ENCODE measurements at regions of chr12 and their contacts with region 1.

Region 1: DNA sequence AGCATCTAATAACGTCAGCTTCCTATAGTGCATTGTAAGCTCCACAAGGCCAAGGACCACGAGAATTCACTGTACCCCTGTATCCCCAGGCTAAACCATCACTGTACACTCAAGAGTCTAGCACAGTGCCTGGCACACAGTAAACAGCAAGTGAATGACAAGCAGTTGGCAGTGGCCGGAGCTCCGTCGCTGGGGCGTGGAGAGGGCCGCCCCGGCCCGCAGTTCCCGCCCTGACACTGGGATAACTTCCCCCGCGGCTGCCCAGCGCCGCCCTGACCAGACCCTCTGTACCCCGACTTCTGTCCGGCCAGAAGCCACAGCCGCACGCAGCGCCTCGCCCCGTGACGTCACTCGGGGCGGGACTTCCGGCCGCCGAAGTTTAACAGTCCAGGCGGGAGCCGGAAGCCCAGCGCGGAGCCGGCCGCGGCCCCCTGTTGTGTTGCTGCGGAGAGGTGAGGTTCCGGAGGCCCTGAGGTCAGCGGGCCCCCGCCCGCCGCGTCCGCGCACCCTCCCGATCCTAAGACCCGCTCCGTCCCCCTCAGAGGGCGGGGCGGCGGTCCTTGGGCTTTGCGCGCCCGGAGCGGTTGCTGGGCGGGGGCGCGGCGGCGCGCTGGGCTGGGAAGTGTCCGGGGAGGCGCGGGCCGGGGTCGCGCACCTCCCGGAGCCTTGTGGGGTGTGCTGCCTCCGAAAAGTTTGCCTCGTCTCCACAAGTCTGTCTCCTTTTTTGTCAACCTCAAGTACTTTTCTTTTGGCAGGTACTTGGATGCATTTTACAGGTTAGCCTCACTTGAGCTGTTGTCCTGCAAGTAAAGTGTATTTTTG is at the start of gene NEDD1:
- DNase-seq: peak; percentile 87
- H3K4me3 Mint-ChIP-seq: peak within 1 kb of the TSS; percentile 83
- H3K27ac Mint-ChIP-seq: peak within 1 kb of the TSS; percentile 96
- H3K4me1 Mint-ChIP-seq: peaks cover 43% of the 10 kb centered on the region
- H3K27me3 Mint-ChIP-seq: peaks cover 8% of the 10 kb centered on the region
- total RNA-seq, gene NEDD1: 38.9 to 40.7 TPM

Region 2: DNA sequence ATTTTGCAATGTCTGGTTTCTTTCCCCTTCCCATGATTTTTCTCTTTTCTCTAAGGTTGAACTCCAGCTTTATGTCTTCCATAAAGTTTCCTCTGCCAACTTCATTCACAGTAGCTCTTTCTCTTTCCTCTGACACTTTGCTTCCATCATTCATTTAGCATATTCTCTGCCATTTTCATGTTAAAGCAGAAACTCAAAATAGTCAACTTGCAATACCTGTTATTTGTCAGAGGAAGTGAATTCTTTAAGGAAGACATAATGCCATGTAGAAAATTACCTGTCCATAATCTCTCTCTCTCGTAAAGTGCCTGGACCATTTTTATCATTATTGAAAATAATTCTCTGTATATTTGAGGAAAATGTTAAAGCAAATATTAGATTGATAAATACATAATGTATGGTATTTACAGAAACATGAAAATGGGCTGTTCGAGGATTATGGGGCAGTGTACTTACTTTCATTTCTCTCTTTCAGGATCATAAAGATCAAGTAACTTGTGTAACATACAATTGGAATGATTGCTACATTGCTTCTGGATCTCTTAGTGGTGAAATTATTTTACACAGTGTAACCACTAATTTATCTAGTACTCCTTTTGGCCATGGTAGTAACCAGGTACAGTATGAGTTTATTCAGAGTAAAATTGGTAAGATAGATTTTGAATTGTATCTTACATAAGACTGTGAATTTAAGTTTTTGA is 12.6 kb after region 1 on chr12:
- CTCF ChIA-PET with region 1: no interaction called
- POLR2A ChIA-PET with region 1: interaction called, 13 read pairs
- DNase-seq: no peak
- H3K4me3 Mint-ChIP-seq: no peak overlapping the region
- H3K27ac Mint-ChIP-seq: no peak overlapping the region
- H3K4me1 Mint-ChIP-seq: peaks cover 5% of the 10 kb centered on the region
- H3K27me3 Mint-ChIP-seq: no peaks in the 10 kb centered on the region

Measured in activated CD4-positive, alpha-beta memory T cell treated with anti-CD3 and anti-CD28 coated beads, Interleukin-2, amount 10 ng/mL, durations not matched to agents 7 days and 5 days (primary cell).